Aorta (tissue), 5 donors: ENCODE measurements at regions of chr17 and their contacts with region 1.

Region 1: GRCh38 chr17:30134551-30134950 is 17.9 kb downstream of the NSRP1 start:
- DNase-seq: no peak
- ATAC-seq: no peak
- H3K4me3 ChIP-seq: no peak overlapping the region
- H3K27ac ChIP-seq: no peak overlapping the region
- H3K4me1 ChIP-seq: no peaks in the 10 kb centered on the region
- H3K27me3 ChIP-seq: no peaks in the 10 kb centered on the region

Region 2: GRCh38 chr17:30074730-30075129 is 59.8 kb before region 1 on chr17:
- intact Hi-C with region 1: no loop called
- DNase-seq: no peak
- ATAC-seq: no peak
- H3K4me3 ChIP-seq: no peak overlapping the region
- H3K27ac ChIP-seq: no peak overlapping the region
- H3K4me1 ChIP-seq: no peaks in the 10 kb centered on the region
- H3K27me3 ChIP-seq: no peaks in the 10 kb centered on the region

Region 3: DNA sequence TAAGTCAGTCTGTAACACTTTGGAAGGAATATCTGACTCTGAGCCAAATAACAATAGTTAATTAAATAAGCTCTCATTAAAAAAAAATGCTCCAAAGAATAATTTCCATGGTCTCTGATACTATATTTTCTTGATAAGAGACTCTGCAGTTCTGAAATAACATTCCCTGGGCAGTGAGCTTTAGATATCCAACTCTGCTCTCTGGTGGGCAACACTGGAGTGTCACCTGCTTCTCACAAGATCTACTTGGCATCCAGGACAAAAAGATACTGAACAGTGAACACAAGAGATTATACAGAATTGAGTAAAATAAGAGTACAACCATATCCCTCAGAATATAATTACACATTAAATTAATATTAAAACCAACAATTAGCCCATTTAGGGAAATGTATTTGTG is 143.5 kb after region 1 on chr17:
- intact Hi-C with region 1: loop called (anchors 5 kb)
- DNase-seq: no peak
- ATAC-seq: peak; percentile 62
- H3K4me3 ChIP-seq: no peak overlapping the region
- H3K27ac ChIP-seq: no peak overlapping the region
- H3K4me1 ChIP-seq: peaks cover 0 to 4% of the 10 kb centered on the region in 2 donors
- H3K27me3 ChIP-seq: no peaks in the 10 kb centered on the region